Heart right ventricle (tissue), 16 donors: ENCODE measurements at regions of chr4 and their contacts with region 1.

Region 1: DNA sequence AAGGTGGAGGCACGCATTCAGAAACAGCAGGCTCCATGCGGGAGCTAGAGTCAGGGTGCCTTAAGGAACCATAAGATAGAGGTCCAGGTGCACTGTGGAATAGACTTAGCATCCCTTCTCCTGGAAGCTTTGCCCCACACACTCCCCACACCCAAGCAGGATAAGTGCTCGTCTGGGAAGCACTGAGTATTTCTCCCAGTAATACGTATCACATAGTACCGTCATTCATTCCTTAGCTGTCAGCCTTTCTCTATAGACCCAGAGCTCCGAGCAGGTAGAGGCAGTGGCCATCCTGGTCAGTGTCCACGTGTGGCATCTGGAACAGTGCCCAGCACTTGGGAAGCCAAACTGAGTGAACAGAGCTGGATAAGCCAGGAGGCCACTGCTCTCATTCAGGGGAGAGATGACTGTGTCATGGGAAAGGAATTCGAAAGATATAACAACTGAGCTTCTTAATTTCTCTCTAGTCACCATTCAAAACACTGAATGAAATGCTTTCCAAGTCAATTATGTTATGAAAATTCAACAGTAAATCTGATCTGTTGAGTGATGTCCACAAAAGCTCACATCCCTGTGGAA is 9.9 kb downstream of the APBB2 start:
- DNase-seq: peak; percentile 46 to 66
- ATAC-seq: peak; percentile 46 to 89 (median 69)
- H3K4me3 ChIP-seq: peak overlapping the region in 1 of 10 donors; percentile 2
- H3K27ac ChIP-seq: peak overlapping the region in 8 of 10 donors; percentile 15 to 76 (median 60)
- H3K4me1 ChIP-seq: peaks cover 0 to 100% (median 70%) of the 10 kb centered on the region in 9 donors
- H3K27me3 ChIP-seq: no peaks in the 10 kb centered on the region
- CTCF ChIP-seq: no peak

Region 2: GRCh38 chr4:41174444-41174843 is 30.0 kb before region 1 on chr4:
- intact Hi-C with region 1: loop called in 1 of 10 experiments (anchors 5 kb)
- DNase-seq: no peak
- ATAC-seq: no peak
- H3K4me3 ChIP-seq: no peak overlapping the region
- H3K27ac ChIP-seq: no peak overlapping the region
- H3K4me1 ChIP-seq: peaks cover 0 to 65% (median 45%) of the 10 kb centered on the region in 9 donors
- H3K27me3 ChIP-seq: no peaks in the 10 kb centered on the region
- CTCF ChIP-seq: no peak